SK-N-SH (cell line): ENCODE measurements at regions of chr12 and their contacts with region 1.

Region 1: GRCh38 chr12:6278439-6279255 is 31.8 kb upstream of the PLEKHG6 start:
- DNase-seq: peak; percentile 98
- H3K4me3 ChIP-seq: peak overlapping the region; percentile 54 to 59
- H3K27ac ChIP-seq: peak overlapping the region; percentile 75 to 88; a peak in 3 of 4 replicates
- H3K4me1 ChIP-seq: peaks cover 32 to 33% of the 10 kb centered on the region in 2 experiments; a peak in 3 of 4 replicates
- H3K27me3 ChIP-seq: no peaks in the 10 kb centered on the region
- CTCF ChIP-seq: peak; percentile 68
- EP300 ChIP-seq: no peak; a peak in 1 of 4 replicates
- RAD21 ChIP-seq: peak; percentile 75

Region 2: DNA sequence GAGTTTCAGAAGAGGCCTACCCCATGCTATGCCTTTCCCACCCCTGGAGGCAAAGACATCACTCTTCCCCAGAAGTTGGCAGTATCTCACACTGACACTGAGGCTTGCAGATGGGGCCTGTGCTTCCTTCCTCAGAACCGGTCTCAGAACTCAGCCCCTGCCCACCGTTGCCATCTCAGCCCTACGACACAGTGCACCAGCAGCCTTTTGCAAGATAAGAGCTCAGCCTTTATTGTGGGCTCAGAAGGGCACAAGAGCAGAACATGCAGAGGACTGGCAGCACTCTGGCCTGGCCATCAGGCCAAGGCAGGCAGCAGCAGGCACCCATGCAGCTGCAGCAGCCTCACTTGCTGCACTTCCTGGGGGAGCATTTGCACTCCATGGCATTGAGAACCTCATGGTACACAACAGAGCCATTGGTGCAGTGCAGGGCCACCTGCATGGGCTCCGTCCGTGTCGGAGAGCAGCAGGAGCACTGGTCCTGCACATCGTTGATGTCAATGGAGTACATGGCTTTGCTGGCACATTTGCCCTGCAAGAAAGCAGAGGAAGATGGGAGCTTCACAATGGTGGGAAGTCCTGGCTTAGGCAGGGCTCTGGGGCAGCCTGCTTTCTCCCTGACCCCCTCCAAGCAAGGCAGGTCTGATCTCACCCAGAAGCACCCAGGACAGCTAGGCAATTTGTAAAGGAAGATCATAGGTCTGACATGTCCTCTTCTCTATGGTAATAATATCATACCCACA is 329.8 kb before region 1 on chr12:
- CTCF ChIA-PET with region 1: no interaction called
- POLR2A ChIA-PET with region 1: no interaction called
- DNase-seq: no peak
- H3K4me3 ChIP-seq: no peak overlapping the region
- H3K27ac ChIP-seq: no peak overlapping the region
- H3K4me1 ChIP-seq: peaks cover 0 to 4% of the 10 kb centered on the region in 2 experiments; a peak in 1 of 4 replicates
- H3K27me3 ChIP-seq: peaks cover 68% of the 10 kb centered on the region
- CTCF ChIP-seq: no peak
- EP300 ChIP-seq: no peak
- RAD21 ChIP-seq: no peak

Region 3: GRCh38 chr12:5988659-5989116 is 290.0 kb before region 1 on chr12:
- CTCF ChIA-PET with region 1: interaction called, 99 read pairs
- POLR2A ChIA-PET with region 1: no interaction called
- DNase-seq: peak; percentile 85
- H3K4me3 ChIP-seq: peak overlapping the region in 1 of 2 experiments; percentile 52; a peak in 1 of 4 replicates
- H3K27ac ChIP-seq: no peak overlapping the region
- H3K4me1 ChIP-seq: peaks cover 0 to 3% of the 10 kb centered on the region in 2 experiments; a peak in 1 of 4 replicates
- H3K27me3 ChIP-seq: no peaks in the 10 kb centered on the region; the same call in 1 of the 2 replicates
- CTCF ChIP-seq: peak; percentile 97
- EP300 ChIP-seq: no peak
- RAD21 ChIP-seq: peak; percentile 94

Region 4: GRCh38 chr12:6074979-6075585 is 203.6 kb before region 1 on chr12:
- CTCF ChIA-PET with region 1: interaction called, 10 read pairs
- POLR2A ChIA-PET with region 1: no interaction called
- DNase-seq: no peak
- H3K4me3 ChIP-seq: no peak overlapping the region
- H3K27ac ChIP-seq: peak overlapping the region in 1 of 2 experiments; percentile 67; a peak in 1 of 4 replicates
- H3K4me1 ChIP-seq: peaks cover 0 to 42% of the 10 kb centered on the region in 2 experiments; a peak in 1 of 4 replicates
- H3K27me3 ChIP-seq: no peaks in the 10 kb centered on the region
- CTCF ChIP-seq: no peak
- EP300 ChIP-seq: no peak
- RAD21 ChIP-seq: no peak

Region 5: DNA sequence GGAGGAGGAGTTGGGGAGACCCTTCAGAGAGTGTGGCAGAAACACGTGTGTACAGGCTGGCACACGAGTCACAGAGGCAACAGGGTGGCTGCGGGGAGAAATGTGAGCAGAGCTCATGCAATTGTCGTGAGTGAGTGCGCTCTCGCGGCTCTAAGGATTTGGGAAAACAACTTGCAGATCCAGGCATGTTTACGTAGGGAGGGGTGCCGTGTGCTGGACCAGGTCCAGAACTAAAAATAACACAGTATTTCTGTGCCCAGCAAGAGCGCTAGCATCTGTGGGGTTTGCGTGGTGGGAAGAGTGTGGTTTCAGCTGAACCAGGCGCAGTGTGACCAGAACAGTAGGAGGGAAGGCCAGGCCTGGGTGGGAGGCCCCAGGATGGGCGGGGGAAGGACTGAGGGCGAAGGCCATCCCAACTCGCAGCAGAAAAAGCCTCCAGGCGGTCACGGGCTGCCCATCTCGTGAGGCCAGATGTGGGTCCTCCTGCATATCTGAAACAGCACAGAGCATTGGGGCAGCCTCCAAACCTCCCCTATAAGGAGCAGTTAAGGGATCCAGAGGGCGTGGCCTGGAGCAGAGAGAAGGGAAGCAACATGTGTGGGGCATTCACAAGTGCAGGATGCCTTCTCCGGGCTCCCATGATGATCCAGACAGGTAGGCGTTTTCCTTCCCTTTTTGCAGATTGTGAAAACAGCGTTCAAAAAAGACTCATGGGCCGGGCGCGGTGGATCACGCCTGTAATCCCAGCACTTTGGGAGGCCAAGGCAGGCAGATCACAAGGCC is 96.3 kb before region 1 on chr12:
- CTCF ChIA-PET with region 1: interaction called, 27 read pairs
- POLR2A ChIA-PET with region 1: no interaction called
- DNase-seq: peak; percentile 87
- H3K4me3 ChIP-seq: no peak overlapping the region
- H3K27ac ChIP-seq: peak overlapping the region in 1 of 2 experiments; percentile 83; a peak in 2 of 4 replicates
- H3K4me1 ChIP-seq: peaks cover 10 to 44% of the 10 kb centered on the region in 2 experiments; a peak in 2 of 4 replicates
- H3K27me3 ChIP-seq: no peaks in the 10 kb centered on the region
- CTCF ChIP-seq: no peak
- EP300 ChIP-seq: peak in 1 of 2 experiments; percentile 45; a peak in 1 of 4 replicates
- RAD21 ChIP-seq: no peak

Region 6: DNA sequence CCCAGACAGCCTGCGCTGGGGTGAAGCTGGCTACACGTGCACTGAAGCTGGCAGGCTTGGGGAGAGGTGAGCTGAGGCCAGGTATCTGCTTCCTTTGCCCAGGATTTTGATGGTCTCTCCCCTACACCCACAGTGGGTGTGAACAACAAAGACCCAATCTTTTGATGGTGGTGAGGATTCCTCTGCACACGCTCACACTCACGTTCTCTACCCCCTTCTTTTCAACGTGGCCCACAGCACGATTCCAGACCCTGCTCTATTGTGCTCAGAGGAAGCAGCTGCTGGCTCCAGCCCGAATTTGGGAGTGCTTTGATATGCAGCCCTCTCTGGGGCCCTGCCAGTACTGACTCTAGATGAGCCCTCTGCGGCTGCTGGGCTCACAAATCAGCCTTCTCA is 73.5 kb before region 1 on chr12:
- CTCF ChIA-PET with region 1: interaction called, 299 read pairs
- POLR2A ChIA-PET with region 1: interaction called, 10 read pairs
- DNase-seq: no peak
- H3K4me3 ChIP-seq: no peak overlapping the region
- H3K27ac ChIP-seq: peak overlapping the region in 1 of 2 experiments; percentile 29; a peak in 1 of 4 replicates
- H3K4me1 ChIP-seq: peaks cover 0 to 51% of the 10 kb centered on the region in 2 experiments; a peak in 1 of 4 replicates
- H3K27me3 ChIP-seq: no peaks in the 10 kb centered on the region
- CTCF ChIP-seq: no peak
- EP300 ChIP-seq: no peak
- RAD21 ChIP-seq: no peak

Region 7: DNA sequence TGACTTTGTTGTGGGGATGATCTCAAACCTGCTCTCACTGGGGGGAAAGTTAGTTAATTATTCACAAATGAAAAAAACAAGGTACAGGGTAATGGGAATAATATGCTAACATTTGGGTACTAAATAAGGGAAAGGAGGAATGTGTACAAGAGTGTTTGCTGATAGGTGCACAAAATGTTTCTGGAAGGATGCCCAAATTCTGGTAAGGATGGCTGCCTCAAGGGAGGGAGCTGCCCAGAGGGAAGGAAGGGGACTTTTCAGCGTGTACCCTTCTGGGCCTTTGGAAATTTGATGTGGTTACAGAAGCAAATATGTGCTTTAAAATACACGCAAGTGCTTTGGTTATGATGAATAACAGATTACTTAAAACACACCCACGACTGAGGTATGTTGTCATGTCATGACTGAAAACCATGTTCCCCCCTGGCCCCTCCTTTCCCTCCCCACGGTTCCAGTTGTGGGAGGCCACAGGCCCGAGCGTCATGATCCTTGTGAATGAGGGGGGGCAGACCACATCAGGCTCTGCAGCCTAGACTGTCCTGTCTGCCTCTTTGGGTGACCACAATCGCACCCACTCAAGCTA is 11.4 kb before region 1 on chr12:
- CTCF ChIA-PET with region 1: interaction called, 29 read pairs
- POLR2A ChIA-PET with region 1: interaction called, 3 read pairs
- DNase-seq: no peak
- H3K4me3 ChIP-seq: no peak overlapping the region
- H3K27ac ChIP-seq: no peak overlapping the region
- H3K4me1 ChIP-seq: peaks cover 0 to 40% of the 10 kb centered on the region in 2 experiments; a peak in 1 of 4 replicates
- H3K27me3 ChIP-seq: no peaks in the 10 kb centered on the region
- CTCF ChIP-seq: no peak
- EP300 ChIP-seq: no peak
- RAD21 ChIP-seq: no peak

Region 8: DNA sequence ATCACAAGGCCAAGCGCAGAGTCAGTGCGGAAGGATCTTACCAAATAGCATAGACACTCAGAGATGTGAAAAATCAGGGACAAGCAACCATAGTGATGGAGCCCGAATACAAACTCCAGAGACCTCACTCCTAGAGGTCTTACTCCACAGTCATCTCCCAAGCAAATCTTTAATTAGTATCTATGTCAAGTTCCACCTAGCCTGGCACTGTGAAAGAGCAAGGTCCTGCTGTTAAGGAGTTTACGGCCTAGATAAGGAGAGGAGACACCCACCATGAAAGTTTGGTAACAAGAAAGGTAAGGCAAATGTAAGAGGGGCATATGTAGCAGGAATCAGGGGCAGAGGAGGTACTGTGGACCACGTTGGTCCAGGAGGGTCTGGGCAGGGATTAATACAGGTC is 24.4 kb after region 1 on chr12:
- CTCF ChIA-PET with region 1: no interaction called
- POLR2A ChIA-PET with region 1: no interaction called
- DNase-seq: no peak
- H3K4me3 ChIP-seq: no peak overlapping the region
- H3K27ac ChIP-seq: no peak overlapping the region
- H3K4me1 ChIP-seq: no peaks in the 10 kb centered on the region
- H3K27me3 ChIP-seq: no peaks in the 10 kb centered on the region
- CTCF ChIP-seq: no peak
- EP300 ChIP-seq: no peak
- RAD21 ChIP-seq: no peak